MCF 10A (cell line): ENCODE measurements at regions of chr3 and their contacts with region 1.

Region 1: GRCh38 chr3:32177702-32178198 is 60.7 kb upstream of the CMTM8 start:
- DNase-seq: peak; percentile 89
- H3K4me3 Mint-ChIP-seq: no peak overlapping the region
- H3K27ac Mint-ChIP-seq: no peak overlapping the region
- H3K4me1 Mint-ChIP-seq: peaks cover 15% of the 10 kb centered on the region
- H3K27me3 Mint-ChIP-seq: no peaks in the 10 kb centered on the region
- CTCF ChIP-seq: peak; percentile 75

Region 2: GRCh38 chr3:32018757-32019564 is 158.8 kb before region 1 on chr3:
- CTCF ChIA-PET with region 1: interaction called, 4 read pairs
- POLR2A ChIA-PET with region 1: interaction called, 3 read pairs
- intact Hi-C with region 1: loop called (anchors 1 kb)
- DNase-seq: peak; percentile 62
- H3K4me3 Mint-ChIP-seq: no peak overlapping the region
- H3K27ac Mint-ChIP-seq: no peak overlapping the region
- H3K4me1 Mint-ChIP-seq: no peaks in the 10 kb centered on the region
- H3K27me3 Mint-ChIP-seq: no peaks in the 10 kb centered on the region
- CTCF ChIP-seq: peak; percentile 62

Region 3: GRCh38 chr3:32198714-32199113 is 21.0 kb after region 1 on chr3:
- CTCF ChIA-PET with region 1: no interaction called
- POLR2A ChIA-PET with region 1: no interaction called
- intact Hi-C with region 1: no loop called
- DNase-seq: no peak
- H3K4me3 Mint-ChIP-seq: no peak overlapping the region
- H3K27ac Mint-ChIP-seq: no peak overlapping the region
- H3K4me1 Mint-ChIP-seq: peaks cover 4% of the 10 kb centered on the region
- H3K27me3 Mint-ChIP-seq: peaks cover 15% of the 10 kb centered on the region
- CTCF ChIP-seq: no peak

Region 4: DNA sequence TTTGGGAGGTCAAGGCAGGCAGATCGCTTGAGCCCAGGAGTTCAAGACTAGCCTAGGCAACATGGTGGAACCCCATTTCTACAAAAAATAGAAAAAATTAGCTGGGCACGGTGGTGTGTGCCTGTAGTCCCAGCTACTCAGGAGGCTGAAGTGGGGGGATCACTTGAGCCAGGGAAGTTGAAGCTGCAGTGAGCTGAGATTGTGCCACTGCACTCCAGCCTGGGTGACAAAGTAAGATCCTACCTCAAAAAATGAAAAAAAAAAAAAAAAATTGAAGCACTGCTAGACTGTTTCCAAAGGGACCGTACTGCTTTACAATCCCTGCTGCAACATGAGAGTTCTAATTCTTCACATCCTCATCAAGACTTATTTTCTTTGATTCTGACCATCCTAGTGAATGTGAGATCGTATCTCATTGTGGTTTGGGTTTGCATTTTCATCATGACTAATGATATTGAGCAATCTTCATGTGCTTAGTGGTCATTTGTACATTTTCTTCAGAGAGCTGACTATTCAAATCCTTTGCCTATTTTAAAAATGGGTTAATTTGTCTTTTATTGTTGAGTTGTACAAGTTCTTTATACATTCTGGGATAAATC is 71.5 kb after region 1 on chr3:
- CTCF ChIA-PET with region 1: interaction called, 5 read pairs
- POLR2A ChIA-PET with region 1: no interaction called
- intact Hi-C with region 1: loop called (anchors 2 kb)
- DNase-seq: peak; percentile 88
- H3K4me3 Mint-ChIP-seq: no peak overlapping the region
- H3K27ac Mint-ChIP-seq: peak overlapping the region; percentile 63
- H3K4me1 Mint-ChIP-seq: peaks cover 8% of the 10 kb centered on the region
- H3K27me3 Mint-ChIP-seq: no peaks in the 10 kb centered on the region
- CTCF ChIP-seq: no peak

Region 5: GRCh38 chr3:32334675-32335074 is 156.9 kb after region 1 on chr3:
- CTCF ChIA-PET with region 1: interaction called, 5 read pairs
- POLR2A ChIA-PET with region 1: no interaction called
- intact Hi-C with region 1: loop called (anchors 1 kb)
- DNase-seq: peak; percentile 20
- H3K4me3 Mint-ChIP-seq: no peak overlapping the region
- H3K27ac Mint-ChIP-seq: no peak overlapping the region
- H3K4me1 Mint-ChIP-seq: no peaks in the 10 kb centered on the region
- H3K27me3 Mint-ChIP-seq: no peaks in the 10 kb centered on the region
- CTCF ChIP-seq: peak; percentile 24

Region 6: GRCh38 chr3:32401556-32402081 is 223.9 kb after region 1 on chr3:
- CTCF ChIA-PET with region 1: interaction called, 17 read pairs
- POLR2A ChIA-PET with region 1: no interaction called
- intact Hi-C with region 1: no loop called
- DNase-seq: peak; percentile 55
- H3K4me3 Mint-ChIP-seq: peak overlapping the region; percentile 62
- H3K27ac Mint-ChIP-seq: peak overlapping the region; percentile 73
- H3K4me1 Mint-ChIP-seq: peaks cover 13% of the 10 kb centered on the region
- H3K27me3 Mint-ChIP-seq: no peaks in the 10 kb centered on the region
- CTCF ChIP-seq: no peak